ENCODE measurements at regions of chr12 and their contacts with region 1.

Region 1: GRCh38 chr12:53213348-53213747 is 6.3 kb upstream of the ITGB7 start:
- DNase-seq: peak; percentile 74
- H3K27ac ChIP-seq: peak overlapping the region; percentile 99
- CTCF ChIP-seq: peak; percentile 93

Region 2: GRCh38 chr12:53251477-53252348 is 38.4 kb after region 1 on chr12:
- CTCF ChIA-PET with region 1: interaction called, 26 read pairs
- POLR2A ChIA-PET with region 1: interaction called, 3 read pairs
- DNase-seq: peak; percentile 83
- H3K27ac ChIP-seq: peak overlapping the region; percentile 88
- CTCF ChIP-seq: no peak; the same call in none of the 2 replicates

Region 3: DNA sequence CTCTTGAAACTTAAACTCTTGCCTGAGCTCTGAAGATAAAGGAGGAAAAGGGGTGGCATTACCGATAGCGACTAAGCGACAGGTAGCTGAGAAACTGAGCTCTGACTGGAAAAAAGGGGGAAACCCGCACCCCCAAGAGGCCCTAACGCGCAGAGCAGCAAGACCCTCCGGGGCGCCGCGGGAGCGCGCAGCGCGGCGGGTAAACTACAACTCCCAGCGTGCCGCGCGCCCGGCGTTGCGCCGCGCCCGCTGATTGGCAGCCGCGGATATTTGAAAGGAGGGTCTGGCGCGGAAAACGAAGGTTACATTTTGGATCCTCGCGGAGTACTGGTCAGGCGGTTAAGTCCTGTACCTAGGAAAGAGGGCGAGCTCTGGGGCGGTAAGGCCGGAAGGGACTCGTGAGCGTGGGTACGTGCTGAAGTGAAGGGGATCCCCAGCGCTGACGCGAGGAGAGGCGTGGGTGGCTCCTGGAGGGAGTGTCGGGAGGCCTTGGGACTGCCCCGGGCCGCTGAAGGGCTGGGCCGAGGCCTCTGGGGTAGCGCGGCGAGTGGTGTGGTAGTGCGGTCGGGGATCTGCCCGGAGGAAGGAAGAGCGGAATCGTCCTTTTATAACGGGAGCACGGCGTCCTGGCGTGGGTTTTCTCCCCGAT is 54.8 kb after region 1 on chr12 and contains the start of gene ESPL1:
- CTCF ChIA-PET with region 1: interaction called, 25 read pairs
- POLR2A ChIA-PET with region 1: no interaction called
- DNase-seq: peak; percentile 87
- H3K27ac ChIP-seq: peak within 1 kb of the TSS; percentile 77
- CTCF ChIP-seq: peak; percentile 60

Region 4: DNA sequence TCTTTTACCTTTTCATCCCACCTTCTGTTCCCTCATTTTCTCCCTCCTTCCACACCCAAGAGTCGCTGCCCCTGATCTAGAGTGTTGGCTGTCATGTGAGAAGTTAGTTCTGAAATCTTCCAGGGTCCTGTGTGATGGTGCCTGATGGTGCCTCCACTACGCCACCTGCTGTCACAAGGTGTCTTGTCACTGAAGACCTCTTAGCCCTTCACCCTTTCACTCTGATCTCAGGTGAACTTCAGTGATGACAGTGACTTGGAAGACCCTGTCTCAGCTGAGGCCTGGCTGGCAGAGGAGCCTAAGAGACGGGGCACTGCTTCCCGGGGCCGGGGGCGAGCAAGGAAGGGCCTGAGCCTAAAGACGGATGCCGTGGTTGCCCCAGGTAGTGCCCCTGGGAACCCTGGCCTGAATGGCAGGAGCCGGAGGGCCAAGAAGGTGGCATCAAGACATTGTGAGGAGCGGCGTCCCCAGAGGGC is 74.4 kb after region 1 on chr12:
- CTCF ChIA-PET with region 1: interaction called, 13 read pairs
- POLR2A ChIA-PET with region 1: no interaction called
- DNase-seq: peak; percentile 48
- H3K27ac ChIP-seq: peak overlapping the region; percentile 44
- CTCF ChIP-seq: peak; percentile 72

Region 5: GRCh38 chr12:53295070-53295890 is 81.9 kb after region 1 on chr12 and contains the start of gene PFDN5:
- CTCF ChIA-PET with region 1: interaction called, 12 read pairs
- POLR2A ChIA-PET with region 1: no interaction called
- DNase-seq: peak; percentile 83
- H3K27ac ChIP-seq: peak within 1 kb of the TSS; percentile 81
- CTCF ChIP-seq: no peak

Region 6: DNA sequence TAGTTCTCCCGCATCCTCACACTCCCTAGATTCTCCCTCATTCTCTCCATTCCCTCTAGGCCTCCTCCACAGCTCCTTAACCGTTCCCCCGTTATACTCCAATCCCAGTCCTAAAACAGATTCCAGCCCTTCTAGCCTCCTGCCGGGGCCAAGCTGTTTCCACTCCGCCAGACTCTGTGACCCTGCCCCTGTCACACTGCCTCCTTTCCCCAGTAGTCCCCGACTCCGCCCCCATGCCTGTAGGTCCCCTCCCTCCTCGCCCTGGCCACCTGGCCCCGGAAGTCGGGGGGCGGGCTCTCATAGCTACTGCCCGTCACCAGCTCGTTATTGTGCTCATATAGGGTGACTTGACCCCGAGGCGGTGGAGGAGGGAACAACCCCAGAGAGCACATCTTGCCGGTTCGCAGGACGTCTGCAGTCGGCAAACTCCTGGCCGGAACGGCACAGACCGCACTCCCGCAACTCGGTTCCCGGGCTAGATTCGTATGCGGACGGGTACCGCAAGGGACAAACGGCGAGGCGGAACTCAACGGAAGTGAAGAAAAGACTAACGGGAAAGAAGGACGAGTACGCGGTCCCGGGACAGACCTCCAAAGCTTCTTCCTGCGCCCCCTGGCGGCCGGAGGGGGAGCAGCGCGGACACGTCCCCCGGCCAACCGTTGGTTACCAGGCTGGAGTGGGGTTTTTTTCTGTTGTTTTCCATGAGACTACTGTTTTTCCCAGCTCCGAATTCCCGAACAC is 107.9 kb after region 1 on chr12 and contains the start of gene AAAS:
- CTCF ChIA-PET with region 1: interaction called, 11 read pairs
- POLR2A ChIA-PET with region 1: no interaction called
- DNase-seq: peak; percentile 97
- H3K27ac ChIP-seq: peak within 1 kb of the TSS; percentile 95
- CTCF ChIP-seq: peak; percentile 98

Region 7: DNA sequence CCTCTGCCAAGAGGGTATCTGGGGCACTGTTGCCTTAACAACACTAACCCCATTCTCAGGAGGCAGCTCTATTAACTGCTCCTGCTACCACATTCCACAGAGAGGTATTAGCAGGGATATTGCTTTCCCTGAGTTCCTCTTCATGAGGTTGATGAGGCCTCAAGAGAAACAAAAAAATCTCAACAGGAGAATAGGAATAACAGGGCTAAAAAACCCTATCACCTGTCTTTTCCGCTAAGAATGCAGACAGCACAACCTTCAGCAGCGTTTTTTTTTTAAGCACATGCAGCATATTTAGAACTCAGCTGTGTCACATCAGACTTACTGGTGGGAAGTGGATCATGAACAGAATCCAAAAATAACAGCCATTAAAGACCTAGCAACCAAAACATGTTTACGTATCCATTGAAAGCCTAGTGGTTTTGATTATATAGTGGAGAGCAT is 383.6 kb after region 1 on chr12:
- CTCF ChIA-PET with region 1: no interaction called
- POLR2A ChIA-PET with region 1: no interaction called
- DNase-seq: no peak
- H3K27ac ChIP-seq: no peak overlapping the region
- CTCF ChIP-seq: no peak